Motor neuron (in vitro differentiated cells): ENCODE measurements at regions of chr2 and their contacts with region 1.

Region 1: GRCh38 chr2:237421542-237422116 is 7.7 kb upstream of the COL6A3 start:
- ATAC-seq: peak in 4 of 8 experiments; percentile 48 to 99 (median 98)
- H3K4me3 ChIP-seq: no peak overlapping the region
- H3K27ac ChIP-seq: no peak overlapping the region
- H3K4me1 ChIP-seq: no peaks in the 10 kb centered on the region

Region 2: GRCh38 chr2:237085248-237086221 is 336.1 kb before region 1 on chr2 and contains the start of gene COPS8:
- in situ Hi-C with region 1: loop called in 1 of 9 experiments (anchors 25 kb)
- ATAC-seq: peak; percentile 88 to 99 (median 98)
- H3K4me3 ChIP-seq: peak within 1 kb of the TSS; percentile 73 to 95 (median 77)
- H3K27ac ChIP-seq: peak within 1 kb of the TSS; percentile 79 to 85
- H3K4me1 ChIP-seq: peaks cover 2 to 14% of the 10 kb centered on the region in 2 donors
- total RNA-seq, gene COPS8: 52.3 to 122 (median 77.1) TPM

Region 3: GRCh38 chr2:237154082-237154638 is 267.5 kb before region 1 on chr2:
- in situ Hi-C with region 1: loop called in 3 of 9 experiments (anchors 25 kb)
- ATAC-seq: peak in 1 of 8 experiments; percentile 72
- H3K4me3 ChIP-seq: no peak overlapping the region
- H3K27ac ChIP-seq: no peak overlapping the region
- H3K4me1 ChIP-seq: no peaks in the 10 kb centered on the region

Region 4: DNA sequence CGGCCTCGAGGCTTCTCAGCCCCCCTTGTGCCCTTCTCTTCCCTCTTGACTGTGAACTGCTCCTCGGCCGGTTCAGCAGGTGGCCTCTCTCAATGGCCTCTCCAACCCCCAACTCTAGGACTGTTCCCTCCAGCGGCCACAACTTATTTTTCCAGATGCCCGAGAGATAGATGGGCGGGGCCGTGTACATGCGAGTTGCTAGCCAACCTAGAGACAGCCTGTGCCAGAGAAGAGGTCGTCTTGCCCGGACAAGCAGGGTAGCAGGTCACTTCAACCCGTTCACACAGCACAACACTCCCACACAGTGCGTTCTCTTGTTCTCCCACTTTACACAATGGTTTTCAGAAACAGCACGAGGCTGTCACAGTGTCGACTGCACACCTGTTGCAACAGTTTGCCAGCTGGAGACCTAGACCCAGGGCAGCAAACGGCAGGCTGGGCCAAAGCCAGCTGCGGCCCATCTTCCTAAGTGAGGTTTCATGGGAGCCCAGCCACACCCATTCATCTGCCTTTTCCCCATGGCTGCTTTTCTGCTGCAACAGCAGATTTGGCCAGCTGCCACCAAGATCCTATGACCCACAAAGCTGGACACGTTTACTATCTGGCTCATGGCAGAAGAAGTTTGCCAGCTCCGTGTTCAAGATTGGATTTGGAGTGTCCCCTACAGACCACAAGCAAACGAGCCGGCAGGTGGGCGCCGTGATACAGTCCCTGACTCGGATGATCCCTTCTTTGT is 137.4 kb after region 1 on chr2:
- in situ Hi-C with region 1: no loop called
- ATAC-seq: peak in 4 of 8 experiments; percentile 31 to 68 (median 44)
- H3K4me3 ChIP-seq: no peak overlapping the region
- H3K27ac ChIP-seq: no peak overlapping the region
- H3K4me1 ChIP-seq: no peaks in the 10 kb centered on the region